Sciatic nerve (tissue), 2 donors: ENCODE measurements at regions of chr19 and their contacts with region 1.

Region 1: GRCh38 chr19:28829762-28830161 is 383.2 kb downstream of the UQCRFS1 start:
- DNase-seq: no peak
- ATAC-seq: no peak

Region 2: DNA sequence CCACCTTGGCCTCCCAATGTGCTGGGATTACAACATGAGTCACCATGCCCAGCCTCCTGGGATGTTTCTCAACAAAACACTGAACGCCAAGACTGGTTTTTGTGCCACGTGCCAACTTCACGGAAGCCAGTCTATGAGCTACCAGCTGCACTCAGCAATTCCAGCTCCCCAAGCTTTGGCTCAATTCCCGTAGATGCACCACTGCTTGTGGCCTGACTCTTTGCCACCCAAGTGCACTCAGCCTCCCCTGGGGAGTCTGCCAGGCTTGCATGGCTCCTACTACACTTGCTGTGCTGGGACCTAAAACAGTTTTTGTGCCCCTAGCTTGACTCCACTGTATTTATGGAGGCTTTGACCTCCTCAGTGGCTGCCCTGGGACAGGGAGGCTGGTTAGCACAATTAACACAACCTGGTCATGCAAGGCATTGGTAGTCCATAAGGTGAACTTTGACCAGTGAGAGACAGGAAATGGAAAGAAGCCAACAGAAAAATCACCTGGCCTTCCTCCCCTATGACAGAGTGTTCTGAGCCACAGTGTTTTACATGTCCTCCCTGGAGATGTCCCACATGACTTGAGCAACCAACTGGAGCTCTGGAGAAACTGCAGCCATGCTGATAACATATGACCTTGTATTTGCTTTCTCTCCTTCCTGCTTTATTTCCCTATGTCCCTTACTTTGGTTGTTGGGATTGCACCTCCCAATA is 789.9 kb before region 1 on chr19:
- intact Hi-C with region 1: no loop called
- DNase-seq: no peak
- ATAC-seq: peak; percentile 62

Region 3: DNA sequence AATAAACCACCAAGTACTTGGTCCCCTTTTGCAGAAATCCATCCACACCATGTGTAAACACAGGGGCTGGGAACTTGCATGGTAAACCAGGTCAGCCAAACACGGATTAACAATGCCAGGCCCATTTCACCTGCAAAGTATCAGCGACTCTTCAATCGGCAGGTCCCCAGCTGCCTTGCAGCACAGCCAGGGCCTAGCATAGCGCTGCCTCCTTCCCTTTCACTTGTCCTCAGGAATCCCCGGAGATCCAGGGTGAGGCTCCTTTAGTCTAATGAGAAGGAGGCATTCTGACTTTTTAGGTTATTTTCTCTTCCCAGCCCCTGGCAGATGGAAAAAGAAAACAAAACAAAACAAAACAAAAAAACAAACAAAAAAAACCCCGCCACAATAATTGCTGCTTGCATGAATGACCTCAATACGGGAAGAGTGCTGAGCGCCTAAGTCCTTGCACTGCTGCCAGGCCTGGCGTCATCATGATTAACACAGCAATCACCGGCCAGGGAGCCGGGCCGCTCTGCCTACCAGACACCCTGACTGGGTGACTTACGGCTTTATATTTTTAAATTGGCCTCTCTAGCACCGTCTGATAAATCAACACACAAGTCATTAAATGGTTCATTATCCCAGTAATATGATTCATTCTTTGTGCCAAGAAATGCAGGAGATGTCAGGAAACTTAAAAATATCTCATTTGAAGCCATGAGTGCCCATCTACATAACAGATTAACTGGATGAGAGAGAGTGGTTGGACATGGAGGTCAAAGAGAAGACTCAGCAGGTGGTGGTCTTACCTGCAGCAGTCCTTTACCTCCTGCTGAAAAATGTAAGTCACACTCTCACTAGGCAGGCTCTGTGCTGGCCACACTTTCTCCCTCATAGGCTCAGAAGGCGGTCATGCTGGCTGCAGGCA is 309.6 kb before region 1 on chr19:
- intact Hi-C with region 1: no loop called
- DNase-seq: peak; percentile 65
- ATAC-seq: peak; percentile 53

Region 4: DNA sequence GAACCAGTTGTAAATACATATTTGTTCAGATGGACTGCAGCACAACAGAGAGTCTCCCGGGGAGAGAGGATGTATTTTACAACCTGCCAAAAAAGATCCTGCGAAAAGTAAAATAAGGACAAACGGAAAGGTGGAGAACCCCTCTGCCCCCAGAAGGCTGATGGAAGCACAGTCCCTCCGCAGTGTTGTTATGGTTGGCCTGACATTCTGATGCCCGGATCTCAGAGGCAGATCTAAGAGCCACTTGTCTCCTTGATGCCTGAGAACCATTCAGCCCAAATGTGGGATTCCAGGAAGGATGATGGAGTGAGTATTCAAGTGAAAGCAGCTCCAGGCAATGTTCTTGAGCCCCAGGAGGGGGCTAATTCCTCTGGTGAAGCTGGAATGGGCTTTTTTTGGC is 2001.1 kb after region 1 on chr19:
- intact Hi-C with region 1: loop called (anchors 5 kb)
- DNase-seq: no peak
- ATAC-seq: peak; percentile 53